ENCODE measurements at regions of chr9 and their contacts with region 1.

Region 1: GRCh38 chr9:20356403-20357035 is 265.8 kb downstream of the MLLT3 start:
- DNase-seq: no peak

Region 2: GRCh38 chr9:20382460-20383071 is 26.0 kb after region 1 on chr9:
- intact Hi-C with region 1: no loop called
- DNase-seq: no peak

Region 3: GRCh38 chr9:20622330-20623020 is 266.0 kb after region 1 on chr9 and contains the start of gene MLLT3:
- intact Hi-C with region 1: loop called (anchors 5 to 10 kb)
- DNase-seq: peak; percentile 99
- total RNA-seq, gene MLLT3: 6.5 to 7.6 TPM

Region 4: GRCh38 chr9:20941174-20941690 is 584.7 kb after region 1 on chr9:
- intact Hi-C with region 1: loop called in 1 of 2 experiments (anchors 5 kb)
- DNase-seq: no peak

Region 5: DNA sequence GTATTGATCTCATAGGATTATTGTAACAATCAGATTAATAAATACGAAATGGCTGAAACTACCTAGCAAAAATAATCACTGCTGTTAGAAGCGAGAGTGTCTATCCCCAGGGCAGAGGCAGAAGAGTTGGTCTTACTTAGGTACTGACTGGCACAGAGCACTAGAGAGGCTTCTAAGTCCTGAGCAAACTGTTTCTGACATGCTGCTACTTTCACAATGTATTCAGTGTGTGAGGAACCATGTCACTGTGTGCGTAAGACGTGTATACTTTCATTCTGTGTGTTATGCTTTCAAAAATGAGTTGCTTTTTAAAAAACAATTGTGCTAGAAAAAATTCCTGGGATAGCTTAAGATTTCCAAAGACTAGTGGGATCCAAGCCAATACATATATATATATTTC is 984.2 kb after region 1 on chr9:
- intact Hi-C with region 1: no loop called
- DNase-seq: no peak

Measured in posterior vena cava (tissue), 2 donors.